Esophagus squamous epithelium (tissue), 5 donors: ENCODE measurements at regions of chr17 and their contacts with region 1.

Region 1: GRCh38 chr17:57665128-57665527 is 80.0 kb downstream of the CCDC182 start:
- DNase-seq: no peak
- H3K4me3 ChIP-seq: no peak overlapping the region
- H3K27ac ChIP-seq: peak overlapping the region in 2 of 4 donors; percentile 7 to 21
- H3K4me1 ChIP-seq: peaks cover 8 to 34% (median 14%) of the 10 kb centered on the region in 3 donors
- H3K27me3 ChIP-seq: no peaks in the 10 kb centered on the region
- CTCF ChIP-seq: no peak
- POLR2A ChIP-seq: no peak

Region 2: GRCh38 chr17:57604771-57605674 is 60.1 kb before region 1 on chr17:
- intact Hi-C with region 1: loop called (anchors 5 kb)
- DNase-seq: no peak
- H3K4me3 ChIP-seq: peak overlapping the region in 2 of 4 donors; percentile 11 to 33
- H3K27ac ChIP-seq: peak overlapping the region; percentile 32 to 75 (median 60)
- H3K4me1 ChIP-seq: peaks cover 24 to 68% (median 35%) of the 10 kb centered on the region in 3 donors
- H3K27me3 ChIP-seq: no peaks in the 10 kb centered on the region
- CTCF ChIP-seq: no peak
- POLR2A ChIP-seq: no peak

Region 3: GRCh38 chr17:57747221-57748017 is 82.3 kb after region 1 on chr17:
- intact Hi-C with region 1: no loop called
- DNase-seq: no peak
- H3K4me3 ChIP-seq: no peak overlapping the region
- H3K27ac ChIP-seq: no peak overlapping the region
- H3K4me1 ChIP-seq: no peaks in the 10 kb centered on the region
- H3K27me3 ChIP-seq: peaks cover 0 to 50% (median 0%) of the 10 kb centered on the region in 4 donors
- CTCF ChIP-seq: peak; percentile 36 to 73 (median 64)
- POLR2A ChIP-seq: no peak